IMR-90 (cell line): ENCODE measurements at regions of chr1 and their contacts with region 1.

Region 1: DNA sequence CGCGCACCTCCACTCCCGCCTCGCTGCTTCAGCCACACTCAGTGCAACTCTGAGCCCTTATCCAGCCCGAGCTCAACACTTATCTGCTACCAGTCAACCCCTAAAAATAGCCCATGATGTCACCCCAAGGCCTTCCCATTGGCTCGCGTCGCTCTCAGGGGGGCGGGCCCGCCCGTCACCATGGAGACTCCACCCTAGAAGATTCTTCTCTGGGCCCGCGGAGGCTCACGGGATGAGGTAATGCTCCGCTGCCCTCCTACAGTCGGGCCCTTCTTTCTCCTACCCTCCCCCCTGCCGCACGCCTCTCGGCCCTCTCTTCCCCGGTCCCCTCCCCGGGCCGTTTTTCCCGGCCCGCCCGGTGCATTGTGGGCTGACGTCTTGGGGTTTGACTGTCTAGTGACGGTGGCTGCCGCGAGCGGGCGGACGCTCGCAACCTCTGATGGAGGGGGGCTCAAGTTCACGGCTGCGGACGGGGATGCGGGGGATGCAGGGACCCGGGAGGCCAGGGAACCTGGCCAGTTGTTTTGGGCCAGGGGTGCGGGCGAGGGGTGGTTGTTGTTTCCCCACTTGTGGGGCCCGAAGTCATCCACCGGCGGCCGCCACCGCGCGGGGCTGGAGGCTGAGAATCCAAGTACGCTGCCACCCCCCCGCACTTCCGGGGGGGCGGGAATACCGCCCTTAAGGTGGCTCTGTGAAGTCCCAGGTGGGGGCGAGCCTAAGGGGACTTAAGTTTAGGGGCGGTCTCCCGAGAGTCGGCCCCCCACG is at the start of gene JUN:
- DNase-seq: peak; percentile 100
- ATAC-seq: peak; percentile 83
- H3K4me3 ChIP-seq: peak within 1 kb of the TSS; percentile 98
- H3K27ac ChIP-seq: peak within 1 kb of the TSS; percentile 91
- H3K4me1 ChIP-seq: peaks cover 8% of the 10 kb centered on the region
- H3K27me3 ChIP-seq: no peaks in the 10 kb centered on the region
- CTCF ChIP-seq: no peak
- POLR2A ChIP-seq: 0 out of 2 replicates have a peak, but pooled peaks have one; percentile 100
- RAD21 ChIP-seq: no peak; the same call in 1 of the 2 replicates
- total RNA-seq, gene JUN: 46.6 and 51.1 TPM in 2 replicates

Region 2: GRCh38 chr1:58201492-58202106 is 582.6 kb before region 1 on chr1:
- CTCF ChIA-PET with region 1: no interaction called
- POLR2A ChIA-PET with region 1: no interaction called
- dilution Hi-C with region 1: no loop called
- in situ Hi-C with region 1: no loop called
- intact Hi-C with region 1: no loop called
- DNase-seq: no peak
- ATAC-seq: no peak
- H3K4me3 ChIP-seq: no peak overlapping the region
- H3K27ac ChIP-seq: no peak overlapping the region
- H3K4me1 ChIP-seq: no peaks in the 10 kb centered on the region
- H3K27me3 ChIP-seq: no peaks in the 10 kb centered on the region
- CTCF ChIP-seq: no peak
- POLR2A ChIP-seq: no peak
- RAD21 ChIP-seq: no peak

Region 3: DNA sequence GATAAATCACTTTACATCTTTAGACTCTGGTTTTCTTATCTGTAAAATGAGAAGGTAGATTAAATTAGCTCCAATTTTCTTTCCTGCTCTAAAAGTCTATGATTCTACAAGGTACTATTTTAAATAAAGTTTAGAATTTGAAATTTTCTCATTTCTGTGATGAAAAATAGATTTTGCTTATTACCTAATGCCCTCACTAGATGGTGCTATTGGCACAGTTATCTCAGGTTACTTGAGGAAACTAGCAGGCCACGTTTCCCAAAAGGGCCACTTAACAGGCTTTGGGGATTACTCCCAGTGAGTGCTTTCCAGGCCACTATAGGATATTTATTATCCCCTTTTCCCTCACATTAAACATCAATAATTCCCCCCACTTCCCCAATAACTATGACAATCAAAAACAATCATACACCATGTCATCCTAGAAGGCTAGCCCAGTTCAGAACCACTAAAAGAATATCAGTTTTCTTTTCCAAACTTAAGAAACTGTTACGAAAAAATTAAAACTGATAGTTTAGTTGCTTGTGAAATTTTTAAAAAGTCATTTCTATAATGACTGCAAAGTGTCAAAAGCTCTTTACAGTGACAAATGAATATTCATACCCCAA is 268.3 kb before region 1 on chr1:
- CTCF ChIA-PET with region 1: no interaction called
- POLR2A ChIA-PET with region 1: no interaction called
- dilution Hi-C with region 1: no loop called
- in situ Hi-C with region 1: no loop called
- intact Hi-C with region 1: loop called (anchors 5 kb)
- DNase-seq: peak; percentile 85
- ATAC-seq: peak; percentile 79
- H3K4me3 ChIP-seq: no peak overlapping the region
- H3K27ac ChIP-seq: no peak overlapping the region
- H3K4me1 ChIP-seq: no peaks in the 10 kb centered on the region
- H3K27me3 ChIP-seq: no peaks in the 10 kb centered on the region
- CTCF ChIP-seq: peak; percentile 85
- POLR2A ChIP-seq: no peak
- RAD21 ChIP-seq: peak; percentile 86

Region 4: GRCh38 chr1:58903514-58904298 is 119.5 kb after region 1 on chr1:
- CTCF ChIA-PET with region 1: no interaction called
- POLR2A ChIA-PET with region 1: interaction called, 4 read pairs
- dilution Hi-C with region 1: no loop called
- in situ Hi-C with region 1: no loop called
- intact Hi-C with region 1: loop called (anchors 1 kb)
- DNase-seq: peak; percentile 89
- ATAC-seq: peak; percentile 89
- H3K4me3 ChIP-seq: peak overlapping the region; percentile 55
- H3K27ac ChIP-seq: peak overlapping the region; percentile 93
- H3K4me1 ChIP-seq: peaks cover 11% of the 10 kb centered on the region
- H3K27me3 ChIP-seq: no peaks in the 10 kb centered on the region
- CTCF ChIP-seq: no peak
- POLR2A ChIP-seq: peak; percentile 92
- RAD21 ChIP-seq: 0 out of 2 replicates have a peak, but pooled peaks have one; percentile 1

Region 5: DNA sequence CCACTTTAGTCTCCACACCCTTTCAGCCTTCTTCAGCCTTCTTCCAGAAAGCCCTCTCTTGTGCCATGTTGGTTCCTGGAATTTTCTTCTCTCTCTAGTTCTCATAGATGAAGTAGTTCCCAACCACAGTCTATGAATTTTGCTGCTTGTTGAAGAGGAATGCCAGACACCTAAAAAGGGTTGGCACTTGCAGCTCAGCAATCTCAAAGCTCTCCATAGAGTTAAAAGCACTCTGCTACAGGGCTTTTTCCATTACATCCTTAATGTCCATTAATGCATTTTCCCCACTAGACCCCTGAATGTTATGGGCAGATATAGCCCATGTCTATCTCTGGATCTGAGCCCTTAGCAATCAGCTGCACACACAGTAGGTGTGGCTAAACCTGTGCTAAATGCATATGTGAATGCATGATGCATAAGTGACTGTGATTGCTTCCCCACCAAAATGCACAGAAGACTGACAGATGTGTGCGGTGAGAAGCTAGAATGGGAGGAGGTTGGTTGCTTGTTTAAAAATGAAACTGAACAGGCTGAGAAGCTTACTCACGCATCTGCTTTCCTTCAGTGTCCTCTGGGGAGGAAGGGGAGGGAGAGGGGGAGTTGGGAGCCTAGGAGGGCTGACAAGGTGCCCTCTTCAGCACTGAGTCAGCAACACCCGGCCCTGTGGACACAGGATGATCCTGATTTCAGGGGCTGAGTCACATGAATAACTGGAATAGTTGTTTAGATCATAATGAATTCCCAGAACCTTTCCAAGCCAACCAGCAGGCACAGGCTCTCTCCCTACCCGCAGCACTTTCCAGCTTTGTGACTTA is 366.6 kb after region 1 on chr1:
- CTCF ChIA-PET with region 1: no interaction called
- POLR2A ChIA-PET with region 1: interaction called, 3 read pairs
- dilution Hi-C with region 1: no loop called
- in situ Hi-C with region 1: no loop called
- intact Hi-C with region 1: loop called (anchors 2 kb)
- DNase-seq: peak; percentile 100
- ATAC-seq: peak; percentile 94
- H3K4me3 ChIP-seq: peak overlapping the region; percentile 23; the same call in 1 of the 2 replicates
- H3K27ac ChIP-seq: peak overlapping the region; percentile 94
- H3K4me1 ChIP-seq: peaks cover 24% of the 10 kb centered on the region
- H3K27me3 ChIP-seq: no peaks in the 10 kb centered on the region
- CTCF ChIP-seq: 0 out of 2 replicates have a peak, but pooled peaks have one; percentile 5
- POLR2A ChIP-seq: no peak
- RAD21 ChIP-seq: no peak; the same call in 1 of the 2 replicates

Region 6: DNA sequence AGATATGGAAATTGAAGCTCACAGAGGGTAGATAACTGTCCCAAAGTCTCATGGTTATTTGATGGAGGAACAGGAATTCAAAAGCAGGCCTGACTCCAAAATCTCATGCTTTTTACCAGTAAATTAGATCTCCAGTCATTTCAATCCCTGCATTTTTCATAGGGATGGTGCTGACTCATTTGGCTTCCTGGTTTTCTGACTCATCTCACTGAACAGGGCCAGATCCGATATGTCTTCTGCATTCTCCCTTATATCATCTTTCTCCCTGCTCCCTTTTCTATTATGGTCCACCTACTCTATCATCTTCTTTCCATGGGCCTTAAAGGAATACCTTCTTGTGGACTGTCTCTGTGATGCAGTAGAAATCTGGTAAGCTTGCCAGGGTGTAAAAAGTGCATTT is 699.9 kb after region 1 on chr1:
- CTCF ChIA-PET with region 1: no interaction called
- POLR2A ChIA-PET with region 1: no interaction called
- dilution Hi-C with region 1: no loop called
- in situ Hi-C with region 1: no loop called
- intact Hi-C with region 1: loop called (anchors 5 kb)
- DNase-seq: peak; percentile 94
- ATAC-seq: peak; percentile 84
- H3K4me3 ChIP-seq: no peak overlapping the region
- H3K27ac ChIP-seq: peak overlapping the region; percentile 36; the same call in 1 of the 2 replicates
- H3K4me1 ChIP-seq: peaks cover 7% of the 10 kb centered on the region; the same call in 1 of the 2 replicates
- H3K27me3 ChIP-seq: no peaks in the 10 kb centered on the region
- CTCF ChIP-seq: no peak
- POLR2A ChIP-seq: no peak
- RAD21 ChIP-seq: no peak

Region 7: DNA sequence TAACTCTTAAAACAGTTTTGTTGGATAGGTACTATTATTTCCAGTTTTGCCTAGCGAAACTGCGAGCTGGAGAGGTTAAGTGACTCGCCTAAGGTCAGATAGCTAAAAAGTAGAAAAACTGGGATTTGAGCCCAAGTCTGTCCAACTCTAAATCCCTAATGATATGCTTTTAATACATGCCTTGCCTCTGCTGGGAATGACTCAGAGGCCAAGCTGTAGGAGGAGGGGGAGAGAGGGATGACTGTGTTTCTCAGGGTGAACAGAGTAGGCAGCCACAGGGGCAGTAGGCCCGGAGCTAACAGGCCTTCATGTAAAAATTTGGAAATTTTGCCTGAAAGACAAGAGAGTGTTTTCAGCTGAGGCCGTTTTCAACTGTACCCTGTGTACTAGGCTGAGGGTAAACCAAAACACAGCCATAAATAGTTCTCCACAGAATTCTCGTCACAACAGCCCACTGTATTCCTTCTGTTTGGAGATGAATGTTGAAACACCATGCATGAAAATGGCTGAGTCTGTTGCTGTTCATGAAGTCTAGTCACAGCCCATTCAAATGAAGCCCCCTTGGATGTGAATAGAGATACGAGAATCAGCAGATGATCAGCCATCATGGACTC is 923.1 kb after region 1 on chr1:
- CTCF ChIA-PET with region 1: no interaction called
- POLR2A ChIA-PET with region 1: interaction called, 4 read pairs
- dilution Hi-C with region 1: no loop called
- in situ Hi-C with region 1: loop called (anchors 10 kb)
- intact Hi-C with region 1: no loop called
- DNase-seq: peak; percentile 98
- ATAC-seq: peak; percentile 85
- H3K4me3 ChIP-seq: no peak overlapping the region
- H3K27ac ChIP-seq: peak overlapping the region; percentile 92
- H3K4me1 ChIP-seq: peaks cover 29% of the 10 kb centered on the region
- H3K27me3 ChIP-seq: no peaks in the 10 kb centered on the region
- CTCF ChIP-seq: no peak
- POLR2A ChIP-seq: no peak
- RAD21 ChIP-seq: peak; percentile 18; the same call in 1 of the 2 replicates